GM10248 (cell line): ENCODE measurements at regions of chr5 and their contacts with region 1.

Region 1: GRCh38 chr5:158995694-158996173 is 104.0 kb downstream of the EBF1 start:
- DNase-seq: no peak
- CTCF ChIP-seq: no peak

Region 2: DNA sequence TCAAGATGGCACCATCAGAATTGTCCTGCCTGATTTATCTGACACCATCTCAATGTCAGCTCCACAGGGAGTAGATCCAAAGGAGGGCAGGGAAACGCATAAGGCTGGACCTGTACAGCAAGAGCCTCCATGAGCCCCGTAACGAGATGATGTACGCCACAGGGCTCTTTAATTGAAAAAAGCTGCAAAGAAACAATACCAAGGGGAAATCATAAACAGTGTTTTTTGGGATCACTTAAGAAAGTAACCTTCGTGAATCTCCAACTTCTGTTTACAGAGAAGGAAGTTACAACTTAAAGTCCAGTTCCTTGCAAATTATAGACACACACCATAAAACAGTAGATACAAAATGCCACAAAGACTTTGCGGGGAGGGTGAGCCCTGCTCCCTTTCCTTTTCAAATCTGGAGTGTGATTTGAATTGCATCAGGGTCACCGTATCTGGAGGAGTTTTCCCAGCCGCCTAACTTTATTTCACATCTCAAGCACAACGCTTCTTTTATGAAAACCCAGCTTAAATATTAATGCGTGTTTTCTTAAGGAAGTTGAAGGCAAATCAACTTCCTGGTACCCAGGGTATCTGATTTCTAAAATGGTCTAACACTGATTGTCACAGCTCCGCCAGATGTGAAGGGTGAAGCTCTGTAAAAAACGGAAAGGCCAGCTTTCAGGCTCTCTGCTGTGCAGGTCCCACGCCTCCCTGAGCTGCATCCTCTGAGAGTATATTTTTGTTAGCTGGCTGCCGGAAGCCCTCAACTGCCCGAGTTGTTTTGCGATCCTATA is 15.1 kb after region 1 on chr5:
- CTCF ChIA-PET with region 1: interaction called, 13 read pairs
- POLR2A ChIA-PET with region 1: no interaction called
- DNase-seq: peak; percentile 62
- CTCF ChIP-seq: no peak